Astrocyte of the cerebellum (primary cell): ENCODE measurements at regions of chr12 and their contacts with region 1.

Region 1: GRCh38 chr12:5083955-5084849 is 40.5 kb downstream of the KCNA5 start:
- DNase-seq: peak; percentile 62
- H3K4me3 ChIP-seq: no peak overlapping the region
- CTCF ChIP-seq: peak; percentile 73

Region 2: GRCh38 chr12:5022465-5023061 is 61.6 kb before region 1 on chr12:
- in situ Hi-C with region 1: loop called (anchors 5 kb)
- DNase-seq: peak; percentile 26
- H3K4me3 ChIP-seq: no peak overlapping the region
- CTCF ChIP-seq: peak; percentile 94

Region 3: GRCh38 chr12:5154091-5154490 is 69.9 kb after region 1 on chr12:
- in situ Hi-C with region 1: no loop called
- DNase-seq: no peak
- H3K4me3 ChIP-seq: no peak overlapping the region
- CTCF ChIP-seq: no peak

Region 4: GRCh38 chr12:5166976-5167375 is 82.8 kb after region 1 on chr12:
- in situ Hi-C with region 1: loop called (anchors 10 kb)
- DNase-seq: peak; percentile 92
- H3K4me3 ChIP-seq: no peak overlapping the region
- CTCF ChIP-seq: no peak